BJ (cell line): ENCODE measurements at regions of chr6 and their contacts with region 1.

Region 1: GRCh38 chr6:21868226-21868625 is 274.7 kb downstream of the SOX4 start:
- DNase-seq: no peak
- H3K4me3 ChIP-seq: no peak overlapping the region
- H3K27me3 ChIP-seq: no peaks in the 10 kb centered on the region
- CTCF ChIP-seq: no peak

Region 2: GRCh38 chr6:21227486-21227885 is 640.7 kb before region 1 on chr6:
- CTCF ChIA-PET with region 1: no interaction called
- POLR2A ChIA-PET with region 1: no interaction called
- DNase-seq: no peak
- H3K4me3 ChIP-seq: no peak overlapping the region
- H3K27me3 ChIP-seq: no peaks in the 10 kb centered on the region
- CTCF ChIP-seq: peak; percentile 10; the same call in 1 of the 2 replicates

Region 3: GRCh38 chr6:21694168-21694567 is 174.1 kb before region 1 on chr6:
- CTCF ChIA-PET with region 1: no interaction called
- POLR2A ChIA-PET with region 1: interaction called, 27 read pairs
- DNase-seq: no peak
- H3K4me3 ChIP-seq: no peak overlapping the region
- H3K27me3 ChIP-seq: no peaks in the 10 kb centered on the region
- CTCF ChIP-seq: no peak

Region 4: GRCh38 chr6:21752054-21752811 is 116.0 kb before region 1 on chr6:
- CTCF ChIA-PET with region 1: no interaction called
- POLR2A ChIA-PET with region 1: interaction called, 13 read pairs
- DNase-seq: no peak
- H3K4me3 ChIP-seq: no peak overlapping the region
- H3K27me3 ChIP-seq: no peaks in the 10 kb centered on the region
- CTCF ChIP-seq: no peak

Region 5: DNA sequence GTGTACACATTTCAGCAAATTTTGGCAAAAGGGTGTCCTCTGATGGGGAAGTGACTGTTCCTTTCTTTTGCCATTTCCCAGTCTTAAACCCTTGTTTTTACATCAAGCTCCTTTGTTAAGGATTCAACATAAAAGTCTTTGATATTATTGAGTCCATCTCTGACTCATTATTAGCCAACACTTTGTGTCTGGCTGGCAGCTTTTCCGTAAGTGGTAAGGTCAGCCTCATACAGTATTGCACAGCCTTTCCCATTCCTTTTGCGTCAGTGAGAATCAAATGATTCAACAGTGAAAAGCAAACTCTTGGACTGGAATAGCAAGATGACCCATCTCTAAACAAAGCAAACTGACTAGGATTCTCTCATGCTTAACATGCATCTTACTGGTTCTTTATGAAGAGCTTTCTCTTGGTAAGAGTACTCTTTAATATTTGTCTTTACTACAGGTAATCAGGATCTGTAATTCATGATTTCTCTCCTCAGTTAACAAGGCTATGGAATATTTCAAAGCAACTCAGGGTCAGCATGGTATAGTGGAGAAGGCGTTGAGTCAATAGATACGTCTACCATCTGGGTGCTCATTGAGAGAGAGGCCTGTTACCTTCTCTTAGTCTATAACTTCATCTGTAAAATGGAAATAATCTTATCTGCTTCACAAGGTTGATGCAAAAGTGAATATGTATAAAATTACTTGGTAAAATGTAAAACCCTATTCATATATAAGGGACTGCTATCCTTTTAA is 245.0 kb after region 1 on chr6:
- CTCF ChIA-PET with region 1: no interaction called
- POLR2A ChIA-PET with region 1: interaction called, 11 read pairs
- DNase-seq: peak; percentile 94
- H3K4me3 ChIP-seq: no peak overlapping the region
- H3K27me3 ChIP-seq: no peaks in the 10 kb centered on the region
- CTCF ChIP-seq: no peak

Region 6: GRCh38 chr6:22206106-22206505 is 337.9 kb after region 1 on chr6:
- CTCF ChIA-PET with region 1: no interaction called
- POLR2A ChIA-PET with region 1: no interaction called
- DNase-seq: no peak
- H3K4me3 ChIP-seq: no peak overlapping the region
- H3K27me3 ChIP-seq: no peaks in the 10 kb centered on the region
- CTCF ChIP-seq: no peak